Heart left ventricle (tissue), 16 donors: ENCODE measurements at regions of chr16 and their contacts with region 1.

Region 1: GRCh38 chr16:25014500-25015147 is 545 bp downstream of the ARHGAP17 start:
- DNase-seq: peak; percentile 52 to 77 (median 60)
- ATAC-seq: peak; percentile 8 to 59 (median 48)
- H3K4me3 ChIP-seq: peak overlapping the region; percentile 71 to 97 (median 84)
- H3K27ac ChIP-seq: peak overlapping the region; percentile 92 to 99 (median 96)
- H3K4me1 ChIP-seq: peaks cover 15 to 76% (median 45%) of the 10 kb centered on the region in 12 donors
- H3K27me3 ChIP-seq: no peaks in the 10 kb centered on the region
- CTCF ChIP-seq: peak in 2 of 12 donors; percentile 16 to 23
- POLR2A ChIP-seq: no peak

Region 2: DNA sequence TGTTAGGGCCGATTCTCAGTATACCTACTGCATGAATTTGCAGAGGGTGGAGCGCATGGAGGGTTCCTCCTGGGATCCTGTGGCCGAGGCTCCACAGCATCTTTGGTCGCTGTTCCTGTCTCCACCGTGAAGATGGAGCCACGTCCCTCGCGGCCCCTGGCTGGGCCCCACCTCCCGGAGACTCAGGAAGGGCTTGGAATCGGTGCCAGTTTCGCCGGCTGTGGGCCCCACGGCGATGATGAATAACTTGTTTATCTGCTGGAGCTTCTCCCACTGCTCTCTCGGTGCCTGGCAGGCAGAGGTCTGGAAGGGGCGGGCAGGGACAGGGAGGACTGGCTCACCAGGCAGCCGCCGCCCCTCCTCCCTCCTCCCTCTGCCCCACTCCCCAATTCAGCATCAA is 160.8 kb before region 1 on chr16:
- intact Hi-C with region 1: no loop called
- DNase-seq: peak in 3 of 5 donors; percentile 17 to 69 (median 39)
- ATAC-seq: peak in 3 of 4 donors; percentile 27 to 56 (median 54)
- H3K4me3 ChIP-seq: no peak overlapping the region
- H3K27ac ChIP-seq: no peak overlapping the region
- H3K4me1 ChIP-seq: peaks cover 0 to 10% (median 1%) of the 10 kb centered on the region in 12 donors
- H3K27me3 ChIP-seq: no peaks in the 10 kb centered on the region
- CTCF ChIP-seq: no peak
- POLR2A ChIP-seq: no peak

Region 3: DNA sequence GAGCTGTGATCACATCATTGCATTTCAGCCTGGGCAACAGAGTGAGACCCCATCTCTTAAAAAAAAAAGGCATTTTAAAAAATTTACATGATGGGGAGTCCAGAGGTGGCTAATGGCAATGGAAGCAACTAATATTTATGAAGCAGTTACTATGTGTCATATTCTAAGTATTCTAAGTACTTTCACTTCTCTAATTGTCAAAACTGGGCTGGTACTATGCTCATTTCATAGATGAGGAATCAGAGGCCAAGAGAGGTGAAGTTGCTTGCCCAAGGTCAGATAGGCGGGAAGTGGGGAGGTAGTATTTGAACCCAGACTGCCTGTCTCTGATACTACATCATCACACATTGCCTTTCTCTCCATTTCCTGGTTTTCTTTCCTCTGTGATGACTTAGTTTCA is 118.2 kb before region 1 on chr16:
- intact Hi-C with region 1: no loop called
- DNase-seq: no peak
- ATAC-seq: no peak
- H3K4me3 ChIP-seq: no peak overlapping the region
- H3K27ac ChIP-seq: no peak overlapping the region
- H3K4me1 ChIP-seq: no peaks in the 10 kb centered on the region
- H3K27me3 ChIP-seq: peaks cover 0 to 4% (median 0%) of the 10 kb centered on the region in 9 donors
- CTCF ChIP-seq: no peak
- POLR2A ChIP-seq: no peak

Region 4: DNA sequence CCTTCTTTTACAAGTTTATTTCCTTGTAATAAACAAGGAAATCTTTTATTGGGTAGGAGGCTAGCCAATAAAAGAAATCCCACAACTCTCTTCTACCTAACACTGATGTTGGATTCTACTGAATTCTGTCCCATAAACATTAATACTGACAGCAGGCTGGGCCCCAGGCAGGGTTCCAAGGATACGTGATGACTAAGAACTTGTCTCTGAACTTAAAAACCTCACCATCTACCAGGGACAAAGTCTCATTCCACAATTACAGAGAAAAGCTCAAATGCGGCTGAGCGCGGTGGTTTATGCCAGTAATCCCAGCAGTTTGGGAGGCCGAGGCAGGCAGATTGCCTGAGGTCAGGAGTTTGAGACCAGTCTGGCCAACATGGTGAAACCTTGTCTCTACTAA is 64.3 kb before region 1 on chr16:
- intact Hi-C with region 1: loop called in 1 of 10 experiments (anchors 10 kb)
- DNase-seq: no peak
- ATAC-seq: no peak
- H3K4me3 ChIP-seq: no peak overlapping the region
- H3K27ac ChIP-seq: no peak overlapping the region
- H3K4me1 ChIP-seq: no peaks in the 10 kb centered on the region
- H3K27me3 ChIP-seq: no peaks in the 10 kb centered on the region
- CTCF ChIP-seq: no peak
- POLR2A ChIP-seq: no peak

Region 5: GRCh38 chr16:24975428-24975889 is 39.2 kb before region 1 on chr16:
- intact Hi-C with region 1: loop called in 8 of 10 experiments (anchors 5 kb)
- DNase-seq: no peak
- ATAC-seq: peak in 1 of 4 donors; percentile 51
- H3K4me3 ChIP-seq: no peak overlapping the region
- H3K27ac ChIP-seq: peak overlapping the region in 4 of 12 donors; percentile 24 to 50 (median 37)
- H3K4me1 ChIP-seq: peaks cover 6 to 89% (median 63%) of the 10 kb centered on the region in 12 donors
- H3K27me3 ChIP-seq: no peaks in the 10 kb centered on the region
- CTCF ChIP-seq: no peak
- POLR2A ChIP-seq: no peak

Region 6: GRCh38 chr16:24988593-24989338 is 25.9 kb before region 1 on chr16:
- intact Hi-C with region 1: loop called in 3 of 10 experiments (anchors 2 kb)
- DNase-seq: peak in 3 of 5 donors; percentile 41 to 62 (median 43)
- ATAC-seq: peak in 3 of 4 donors; percentile 29 to 57 (median 57)
- H3K4me3 ChIP-seq: peak overlapping the region in 5 of 12 donors; percentile 0 to 30 (median 7)
- H3K27ac ChIP-seq: peak overlapping the region; percentile 65 to 90 (median 84)
- H3K4me1 ChIP-seq: peaks cover 40 to 100% (median 97%) of the 10 kb centered on the region in 12 donors
- H3K27me3 ChIP-seq: no peaks in the 10 kb centered on the region
- CTCF ChIP-seq: no peak
- POLR2A ChIP-seq: no peak

Region 7: DNA sequence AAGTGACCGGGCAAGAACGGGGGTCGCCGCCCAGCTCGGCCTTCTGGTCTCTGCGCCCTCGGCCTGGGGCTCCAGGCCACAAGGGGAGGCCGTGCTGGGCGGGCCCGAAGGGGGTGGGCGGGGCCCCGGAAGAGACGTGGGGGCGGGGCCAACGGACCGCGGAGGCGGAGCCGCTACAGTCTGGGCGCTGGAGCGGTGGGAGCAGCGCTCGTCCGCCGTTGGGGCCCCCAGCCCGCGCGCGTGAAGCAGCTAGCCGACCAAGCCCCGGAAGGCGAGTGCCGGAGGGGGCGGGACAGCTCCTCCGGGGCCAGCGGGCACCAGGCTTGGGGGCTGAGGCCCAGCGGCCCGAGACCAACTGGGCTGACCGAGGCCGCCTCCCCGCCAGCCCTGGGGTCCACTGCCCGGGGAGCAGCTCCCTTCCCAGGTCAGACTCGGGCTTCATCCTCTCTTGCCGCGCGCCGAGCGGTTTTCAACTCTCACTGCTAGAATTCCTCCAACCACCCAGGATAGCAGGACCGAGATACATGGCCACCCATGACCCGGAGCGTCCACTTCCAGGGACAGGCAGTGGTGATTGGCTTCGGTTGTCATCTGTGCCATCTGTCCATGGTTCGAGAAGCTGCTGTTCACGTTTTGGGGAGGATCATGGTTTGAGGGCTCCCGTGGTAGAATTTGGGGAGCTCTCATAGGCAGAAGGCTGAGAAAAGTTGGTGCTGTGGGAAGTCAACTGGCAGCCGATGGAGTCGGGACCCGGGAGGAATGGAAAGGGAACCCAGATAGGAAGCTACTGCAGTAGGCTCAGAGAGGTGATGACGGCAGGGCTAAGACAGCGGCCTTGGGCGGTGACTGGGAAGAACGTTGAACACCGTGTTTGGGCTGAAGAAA is 52.4 kb after region 1 on chr16:
- intact Hi-C with region 1: loop called in 1 of 10 experiments (anchors 5 kb)
- DNase-seq: peak; percentile 86 to 91 (median 89)
- ATAC-seq: peak; percentile 68 to 96 (median 93)
- H3K4me3 ChIP-seq: peak overlapping the region; percentile 46 to 91 (median 80)
- H3K27ac ChIP-seq: peak overlapping the region; percentile 83 to 97 (median 93)
- H3K4me1 ChIP-seq: peaks cover 0 to 35% (median 18%) of the 10 kb centered on the region in 12 donors
- H3K27me3 ChIP-seq: no peaks in the 10 kb centered on the region
- CTCF ChIP-seq: no peak
- POLR2A ChIP-seq: peak; percentile 46 to 93

Region 8: GRCh38 chr16:25395528-25395927 is 380.9 kb after region 1 on chr16:
- intact Hi-C with region 1: no loop called
- DNase-seq: no peak
- ATAC-seq: no peak
- H3K4me3 ChIP-seq: no peak overlapping the region
- H3K27ac ChIP-seq: no peak overlapping the region
- H3K4me1 ChIP-seq: no peaks in the 10 kb centered on the region
- H3K27me3 ChIP-seq: no peaks in the 10 kb centered on the region
- CTCF ChIP-seq: no peak
- POLR2A ChIP-seq: no peak